ENCODE measurements at regions of chr3 and their contacts with region 1.

Region 1: DNA sequence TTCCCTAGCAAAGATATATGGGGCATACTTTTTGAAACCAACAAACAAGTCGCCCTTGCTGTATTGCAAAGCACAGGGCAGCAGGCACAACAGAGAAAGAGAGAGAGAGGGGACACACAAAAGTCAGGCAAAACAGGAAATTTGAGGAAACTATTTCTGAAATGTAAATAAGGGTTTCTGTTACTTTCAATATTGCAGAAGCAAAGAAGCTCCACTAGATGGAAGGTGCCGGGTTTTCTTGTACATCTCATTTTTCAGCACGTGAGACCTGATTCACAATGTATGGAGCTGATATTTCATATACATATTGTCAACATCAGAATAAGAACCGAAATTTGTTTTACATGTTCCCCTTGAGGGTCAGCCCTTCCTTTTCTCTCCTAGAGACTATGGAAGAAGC is 127.4 kb downstream of the FOXP1 start:
- DNase-seq: no peak
- ATAC-seq: peak; percentile 10
- H3K4me3 Mint-ChIP-seq: peak overlapping the region; percentile 62
- H3K27ac Mint-ChIP-seq: peak overlapping the region; percentile 92
- H3K4me1 Mint-ChIP-seq: peaks cover 91% of the 10 kb centered on the region
- H3K27me3 Mint-ChIP-seq: no peaks in the 10 kb centered on the region

Region 2: DNA sequence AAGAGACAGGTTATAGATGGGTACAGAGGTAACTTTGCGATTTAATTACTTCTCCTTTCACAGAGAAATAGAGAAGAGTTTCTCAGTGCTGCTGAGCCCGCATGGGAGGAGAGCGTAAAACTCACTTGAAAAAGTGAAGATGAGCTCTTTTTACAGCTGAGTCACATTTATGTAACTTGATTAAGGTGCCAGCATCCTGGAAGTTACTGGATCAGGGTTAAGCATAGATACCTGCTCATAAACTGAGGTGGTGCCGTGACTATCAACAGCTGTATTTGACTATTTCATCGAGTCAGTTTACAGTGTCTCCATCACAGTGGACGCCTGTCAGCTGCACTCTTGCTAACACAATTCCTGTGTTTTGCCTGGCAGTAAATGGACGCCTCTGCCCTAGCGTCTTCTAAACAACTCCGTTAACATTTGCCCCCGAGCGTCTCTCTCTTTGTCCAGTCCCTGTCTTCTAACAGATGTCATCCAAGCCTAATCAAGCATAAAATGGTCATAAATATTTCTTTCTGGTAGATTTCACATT is 287.2 kb before region 1 on chr3:
- CTCF ChIA-PET with region 1: no interaction called
- POLR2A ChIA-PET with region 1: no interaction called
- intact Hi-C with region 1: no loop called
- DNase-seq: no peak
- ATAC-seq: no peak
- H3K4me3 Mint-ChIP-seq: no peak overlapping the region
- H3K27ac Mint-ChIP-seq: no peak overlapping the region
- H3K4me1 Mint-ChIP-seq: peaks cover 56% of the 10 kb centered on the region
- H3K27me3 Mint-ChIP-seq: no peaks in the 10 kb centered on the region

Region 3: DNA sequence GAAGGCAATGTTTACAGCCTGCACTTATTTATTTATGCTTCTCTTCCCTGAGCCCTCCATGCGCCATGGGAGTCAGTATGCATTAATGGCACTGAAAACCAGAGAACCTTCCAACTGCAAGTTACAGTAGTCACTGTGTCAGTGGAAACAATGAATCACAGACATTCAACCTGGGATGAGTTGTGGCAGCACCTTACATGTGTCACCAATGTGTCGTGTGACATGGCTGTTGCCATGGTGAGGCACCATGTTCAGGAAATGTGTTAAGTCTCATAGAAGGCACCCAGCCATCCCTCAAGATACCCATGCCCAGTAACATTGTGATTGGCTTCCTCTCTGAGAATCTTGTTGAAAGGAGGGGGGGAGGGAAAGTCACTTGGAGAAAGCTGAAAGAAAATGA is 22.4 kb after region 1 on chr3:
- CTCF ChIA-PET with region 1: interaction called, 7 read pairs
- POLR2A ChIA-PET with region 1: no interaction called
- intact Hi-C with region 1: loop called (anchors 1 kb)
- DNase-seq: peak; percentile 89
- ATAC-seq: peak; percentile 98
- H3K4me3 Mint-ChIP-seq: peak overlapping the region; percentile 19
- H3K27ac Mint-ChIP-seq: peak overlapping the region; percentile 93
- H3K4me1 Mint-ChIP-seq: peaks cover 78% of the 10 kb centered on the region
- H3K27me3 Mint-ChIP-seq: no peaks in the 10 kb centered on the region

Region 4: GRCh38 chr3:71753630-71754483 is 297.7 kb after region 1 on chr3 and contains the start of gene GPR27:
- CTCF ChIA-PET with region 1: no interaction called
- POLR2A ChIA-PET with region 1: interaction called, 11 read pairs
- intact Hi-C with region 1: no loop called
- DNase-seq: peak; percentile 45
- ATAC-seq: peak; percentile 72
- H3K4me3 Mint-ChIP-seq: peak within 1 kb of the TSS; percentile 53
- H3K27ac Mint-ChIP-seq: no peak within 1 kb of the TSS
- H3K4me1 Mint-ChIP-seq: peaks cover 5% of the 10 kb centered on the region
- H3K27me3 Mint-ChIP-seq: peaks cover 31% of the 10 kb centered on the region
- total RNA-seq, gene GPR27: 1.2 to 1.6 TPM